ENCODE measurements at regions of chr21 and their contacts with region 1.

Region 1: DNA sequence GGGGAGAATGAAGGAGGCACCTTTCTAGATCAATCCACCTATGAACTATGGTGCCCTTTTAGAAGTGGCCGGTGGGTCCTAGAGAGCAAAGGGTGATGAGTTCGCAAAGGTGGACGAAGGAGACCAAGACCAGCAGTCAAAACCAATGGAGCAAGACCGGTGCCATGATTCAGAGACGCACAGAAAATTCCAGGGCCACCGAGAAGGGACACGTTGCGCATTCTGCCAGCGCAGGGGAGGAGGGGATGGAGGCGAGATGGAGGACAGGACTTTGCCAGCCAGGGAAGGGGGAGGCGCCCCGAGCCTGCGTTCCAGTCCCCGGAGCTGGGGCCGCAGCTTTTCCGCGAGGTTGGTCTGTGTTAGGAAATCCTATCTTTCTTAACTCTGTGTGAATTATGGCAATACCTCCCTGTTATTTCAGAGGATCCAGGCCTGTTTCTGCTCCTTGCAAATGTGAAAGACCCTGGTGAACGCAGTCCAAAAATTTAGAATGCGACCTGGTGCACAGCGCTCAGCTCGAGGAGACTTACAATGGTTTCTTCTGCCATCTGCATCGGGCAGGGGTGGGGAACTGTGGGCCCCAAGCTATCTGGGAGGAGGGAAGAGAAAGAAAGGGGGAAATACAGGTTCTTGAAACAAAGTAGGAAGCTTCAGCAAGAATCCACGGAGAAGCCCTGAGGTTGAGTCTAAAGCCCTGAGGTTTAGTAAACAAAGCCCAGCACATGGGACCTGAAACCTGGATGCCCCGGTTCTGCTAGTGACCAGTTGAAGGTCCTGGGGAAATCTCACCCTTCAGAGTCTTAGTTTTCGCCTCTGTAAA is 129.4 kb downstream of the MRPS6 start:
- DNase-seq: peak in 1 of 2 experiments; percentile 76
- H3K4me3 ChIP-seq: peak overlapping the region; percentile 34 to 59 (median 56)
- H3K27ac ChIP-seq: peak overlapping the region; percentile 75
- H3K4me1 ChIP-seq: peaks cover 7 to 24% (median 12%) of the 10 kb centered on the region in 4 experiments
- H3K27me3 ChIP-seq: no peaks in the 10 kb centered on the region
- CTCF ChIP-seq: no peak
- EP300 ChIP-seq: no peak
- POLR2A ChIP-seq: peak in 1 of 2 experiments; percentile 30; a peak in 1 of 3 replicates
- RAD21 ChIP-seq: no peak

Region 2: DNA sequence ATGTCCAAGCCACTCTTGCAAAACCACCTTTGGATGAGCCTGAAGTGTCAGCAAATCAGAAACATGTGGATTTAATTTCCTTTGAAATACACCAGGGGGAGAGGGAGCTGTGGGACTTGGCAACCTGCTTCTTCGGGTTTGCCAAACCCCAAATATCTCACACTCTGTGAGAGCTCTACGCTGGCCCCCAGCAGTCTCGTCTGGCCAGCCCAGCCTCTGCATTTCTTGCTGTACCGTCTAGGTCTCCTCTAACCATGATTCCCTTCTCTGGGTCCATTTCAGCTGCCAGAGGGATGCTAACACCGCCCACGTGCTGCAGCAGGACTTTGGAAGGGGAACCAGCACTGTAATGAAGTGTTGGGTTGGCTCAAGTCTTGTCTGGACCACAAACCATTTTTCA is 14.8 kb before region 1 on chr21:
- CTCF ChIA-PET with region 1: interaction called, 11 read pairs
- POLR2A ChIA-PET with region 1: interaction called, 5 read pairs
- DNase-seq: no peak
- H3K4me3 ChIP-seq: no peak overlapping the region
- H3K27ac ChIP-seq: no peak overlapping the region
- H3K4me1 ChIP-seq: peaks cover 0 to 5% (median 0%) of the 10 kb centered on the region in 4 experiments; a peak in 1 of 7 replicates
- H3K27me3 ChIP-seq: no peaks in the 10 kb centered on the region
- CTCF ChIP-seq: no peak
- EP300 ChIP-seq: no peak
- POLR2A ChIP-seq: no peak
- RAD21 ChIP-seq: no peak

Region 3: DNA sequence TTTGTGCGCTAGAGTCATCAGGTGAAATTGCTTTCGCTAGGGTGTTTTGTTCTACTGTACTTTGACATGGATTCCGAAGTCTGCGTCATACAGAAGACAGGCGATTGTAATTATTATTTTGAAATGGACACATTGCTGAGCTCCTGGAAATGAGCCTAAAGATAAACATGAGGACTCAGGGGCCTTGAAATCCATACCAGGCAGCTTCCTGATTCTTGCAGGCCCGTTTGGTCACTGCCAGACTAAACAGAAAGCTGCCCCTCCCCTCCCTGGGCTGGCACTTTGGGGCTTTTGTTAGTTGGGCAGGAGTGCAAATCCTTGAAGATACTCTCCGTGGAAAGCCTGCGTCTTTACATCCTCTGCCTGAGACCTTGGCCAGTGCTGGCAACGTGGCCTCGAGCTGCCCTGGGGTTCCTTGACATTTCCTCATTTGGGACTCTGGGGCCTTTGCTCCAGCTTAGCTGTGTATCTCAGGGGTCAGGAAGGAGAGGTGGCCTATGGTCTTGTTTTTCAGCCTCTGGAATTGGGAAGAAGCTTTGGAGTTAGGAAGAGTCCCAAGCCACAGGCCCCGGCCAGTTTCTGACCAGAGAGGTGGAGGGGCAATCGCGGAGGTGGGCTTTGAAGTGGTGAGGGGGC is 134.1 kb after region 1 on chr21:
- CTCF ChIA-PET with region 1: no interaction called
- POLR2A ChIA-PET with region 1: no interaction called
- DNase-seq: peak in 1 of 2 experiments; percentile 26
- H3K4me3 ChIP-seq: no peak overlapping the region
- H3K27ac ChIP-seq: no peak overlapping the region
- H3K4me1 ChIP-seq: no peaks in the 10 kb centered on the region; a peak in 2 of 7 replicates
- H3K27me3 ChIP-seq: no peaks in the 10 kb centered on the region
- CTCF ChIP-seq: no peak
- EP300 ChIP-seq: no peak
- POLR2A ChIP-seq: no peak
- RAD21 ChIP-seq: no peak

Measured in H1 (cell line).